ENCODE measurements at regions of chr11 and their contacts with region 1.

Region 1: GRCh38 chr11:78645226-78646202 is 70.8 kb upstream of the NARS2 start:
- DNase-seq: no peak
- H3K4me3 ChIP-seq: no peak overlapping the region
- CTCF ChIP-seq: peak; percentile 91

Region 2: DNA sequence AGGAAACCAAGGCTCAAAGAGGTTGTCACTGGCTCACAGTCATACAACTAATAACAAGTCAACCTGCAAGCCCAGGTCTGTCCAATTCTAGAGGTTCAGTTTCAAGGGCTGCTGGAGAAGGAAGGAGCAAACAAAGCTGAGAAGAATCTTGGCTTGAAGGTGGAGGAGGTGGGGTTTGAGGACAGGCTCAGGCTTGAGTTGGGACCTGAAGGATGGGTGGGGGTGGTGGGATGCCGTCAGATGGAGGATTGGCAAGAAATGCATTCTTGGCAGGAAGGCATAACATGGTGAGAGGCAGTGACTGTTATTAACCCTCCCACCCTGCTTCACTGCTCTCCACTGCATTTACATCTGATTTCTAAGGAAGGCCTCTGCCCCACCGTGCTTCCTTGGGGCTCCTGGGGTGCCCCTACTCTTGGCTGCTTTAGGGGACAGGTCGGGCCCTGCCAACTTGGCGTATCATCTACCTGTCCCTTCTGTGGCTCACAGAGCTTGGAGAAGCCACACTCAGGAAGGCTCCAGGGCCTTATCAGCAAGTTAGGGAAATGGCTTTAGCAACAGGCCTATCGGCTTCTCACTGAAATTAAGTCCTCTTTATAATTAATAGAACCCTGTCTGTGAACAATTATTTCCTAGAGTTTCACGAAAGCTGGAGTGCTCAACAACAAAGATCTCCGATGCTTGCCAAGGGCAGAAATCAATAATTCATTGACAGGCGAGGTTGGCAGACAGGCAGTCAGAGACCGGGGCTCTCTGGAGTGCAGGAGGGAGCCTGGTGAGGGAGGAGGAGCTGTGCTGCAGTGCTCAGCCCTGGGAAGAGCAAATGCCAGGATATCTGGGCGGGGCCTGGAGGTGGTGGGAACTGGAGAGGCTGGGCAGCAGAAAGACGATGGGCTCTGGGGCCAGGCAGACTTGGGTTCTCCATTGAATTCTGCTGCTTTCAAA is 14.1 kb after region 1 on chr11:
- CTCF ChIA-PET with region 1: interaction called, 173 read pairs
- POLR2A ChIA-PET with region 1: no interaction called
- DNase-seq: no peak
- H3K4me3 ChIP-seq: no peak overlapping the region
- CTCF ChIP-seq: no peak

Region 3: GRCh38 chr11:78708383-78708782 is 62.9 kb after region 1 on chr11:
- CTCF ChIA-PET with region 1: interaction called, 206 read pairs
- POLR2A ChIA-PET with region 1: no interaction called
- DNase-seq: no peak
- H3K4me3 ChIP-seq: no peak overlapping the region
- CTCF ChIP-seq: no peak

Region 4: GRCh38 chr11:78812513-78813293 is 167.2 kb after region 1 on chr11:
- CTCF ChIA-PET with region 1: interaction called, 22 read pairs
- POLR2A ChIA-PET with region 1: interaction called, 3 read pairs
- DNase-seq: no peak
- H3K4me3 ChIP-seq: no peak overlapping the region
- CTCF ChIP-seq: peak; percentile 5

Region 5: DNA sequence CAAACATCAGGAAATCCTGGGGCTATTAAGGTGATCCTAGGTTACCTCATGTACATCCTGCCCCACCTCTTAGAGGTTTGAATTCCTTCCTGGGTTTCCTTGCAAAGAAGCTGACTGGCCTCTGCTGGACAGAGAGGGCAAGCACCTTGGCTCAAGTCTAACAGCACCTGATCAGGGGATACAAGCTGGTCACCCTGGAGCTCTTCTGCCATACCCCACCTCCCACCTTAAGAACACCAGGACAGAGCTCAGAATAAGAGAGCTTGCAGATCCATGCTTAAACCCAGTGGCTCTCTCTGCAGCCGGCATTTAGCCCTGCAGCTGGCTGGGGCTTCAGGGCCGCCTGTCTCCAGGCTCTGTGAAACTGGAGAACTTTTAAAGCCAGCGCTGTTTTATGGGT is 315.7 kb after region 1 on chr11:
- CTCF ChIA-PET with region 1: interaction called, 102 read pairs
- POLR2A ChIA-PET with region 1: no interaction called
- DNase-seq: no peak
- H3K4me3 ChIP-seq: no peak overlapping the region
- CTCF ChIP-seq: peak; percentile 51

Region 6: GRCh38 chr11:79062814-79063762 is 417.6 kb after region 1 on chr11:
- CTCF ChIA-PET with region 1: interaction called, 21 read pairs
- POLR2A ChIA-PET with region 1: no interaction called
- DNase-seq: no peak
- H3K4me3 ChIP-seq: no peak overlapping the region
- CTCF ChIP-seq: peak; percentile 60

Region 7: DNA sequence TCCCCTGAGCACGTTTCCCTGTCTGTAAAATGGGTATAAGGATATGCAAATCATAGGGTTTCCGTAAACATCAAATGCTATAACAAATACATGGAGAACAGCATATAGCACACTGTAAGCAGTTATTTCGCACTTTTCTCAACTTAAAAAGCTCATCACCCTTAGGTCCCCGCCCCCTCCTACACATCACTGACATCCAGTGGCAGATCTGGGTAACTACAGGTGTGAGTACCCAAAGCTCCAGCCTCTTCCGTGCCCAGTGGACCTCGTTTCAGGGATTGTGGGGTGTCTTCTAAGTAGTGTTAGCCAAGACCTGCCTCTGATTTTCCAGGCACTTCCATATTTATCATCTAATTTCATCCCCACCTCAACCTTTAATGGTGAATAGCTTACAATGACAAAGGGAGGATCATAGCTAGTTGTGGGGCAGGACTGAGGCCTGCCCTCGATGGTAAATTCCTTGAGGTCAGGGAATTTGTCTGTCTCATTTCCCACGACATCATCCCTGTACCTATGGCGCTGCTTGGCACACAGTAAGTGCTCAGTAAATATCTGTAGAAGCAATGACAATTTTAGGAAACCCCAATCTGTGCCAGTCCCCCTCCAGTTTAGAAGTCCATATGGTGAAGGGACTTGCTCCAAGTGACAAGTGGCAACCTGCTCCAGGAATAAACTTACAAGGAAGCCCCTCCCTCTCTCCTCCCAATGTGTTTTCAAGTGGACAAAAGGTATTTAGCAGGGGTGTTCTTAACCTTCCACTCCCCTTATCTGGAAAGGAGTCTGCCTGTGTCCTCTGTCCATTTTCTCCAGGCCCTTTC is 454.8 kb after region 1 on chr11:
- CTCF ChIA-PET with region 1: interaction called, 124 read pairs
- POLR2A ChIA-PET with region 1: no interaction called
- DNase-seq: no peak
- H3K4me3 ChIP-seq: no peak overlapping the region
- CTCF ChIP-seq: peak; percentile 84

Measured in AG04449 (cell line).